HEK293 (cell line): ENCODE measurements at regions of chr1 and their contacts with region 1.

Region 1: DNA sequence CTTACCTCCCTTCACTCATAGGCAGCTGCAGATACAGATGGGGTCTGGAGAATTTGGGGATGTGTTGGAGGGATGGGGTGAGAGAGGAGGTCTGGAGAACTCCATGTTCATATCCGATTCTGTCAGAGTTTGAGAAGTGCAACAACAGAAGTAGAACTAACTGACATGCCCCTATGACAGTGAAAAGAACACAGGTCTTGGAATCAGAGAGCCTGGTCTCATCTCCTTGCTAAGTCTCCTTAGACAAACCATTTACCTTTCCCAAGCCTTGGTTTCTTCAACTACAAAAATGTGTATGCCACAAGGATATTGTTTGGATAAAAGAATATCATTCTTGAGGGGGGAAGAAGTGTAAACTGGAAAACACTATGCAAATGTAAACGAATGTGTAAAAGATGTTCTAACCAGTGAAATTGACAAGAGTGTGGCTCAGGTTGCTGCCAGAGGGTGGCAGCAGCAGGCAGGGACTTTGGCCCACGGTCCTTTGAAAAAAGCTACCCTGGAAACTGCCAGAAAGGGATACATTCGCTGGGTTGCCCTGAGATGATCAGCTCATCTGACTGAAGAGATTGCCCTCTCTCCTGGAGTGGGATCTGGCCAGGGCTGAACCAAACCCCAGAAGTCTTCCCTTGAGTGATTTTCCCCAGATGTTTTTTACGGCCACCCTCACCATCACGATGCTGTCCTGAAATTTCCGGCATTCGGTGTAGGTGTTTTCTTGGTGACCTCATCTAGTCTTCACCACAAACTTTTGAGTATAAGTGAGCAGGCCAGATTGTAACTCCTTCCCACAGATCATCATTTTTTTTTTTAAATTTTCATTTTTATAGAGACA is 17.0 kb upstream of the CD2 start:
- H3K4me3 ChIP-seq: no peak overlapping the region
- H3K27ac ChIP-seq: no peak overlapping the region
- H3K4me1 ChIP-seq: no peaks in the 10 kb centered on the region
- CTCF ChIP-seq: peak; percentile 52; the same call in 1 of the 2 replicates

Region 2: DNA sequence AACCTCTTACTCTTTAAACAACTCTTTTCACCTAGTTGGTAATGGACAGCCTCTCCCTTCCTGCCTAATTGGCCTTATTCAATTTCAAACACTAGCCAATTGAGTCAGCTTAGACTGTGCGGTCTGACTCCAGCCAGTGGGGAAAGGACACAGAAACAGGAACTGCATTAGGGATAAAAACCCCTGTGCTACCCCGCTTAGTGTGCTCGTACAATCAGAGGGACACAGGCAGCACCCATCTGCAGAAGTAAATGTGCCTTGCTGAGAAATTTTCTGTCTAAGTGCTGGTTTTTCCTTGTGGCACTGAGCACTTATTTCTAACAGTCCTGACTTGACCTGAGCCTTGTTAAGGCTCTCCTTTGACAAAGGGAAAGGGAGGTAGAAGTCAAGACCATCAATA is 11.0 kb after region 1 on chr1:
- CTCF ChIA-PET with region 1: interaction called, 10 read pairs
- POLR2A ChIA-PET with region 1: no interaction called
- H3K4me3 ChIP-seq: no peak overlapping the region
- H3K27ac ChIP-seq: no peak overlapping the region
- H3K4me1 ChIP-seq: no peaks in the 10 kb centered on the region
- CTCF ChIP-seq: no peak

Region 3: GRCh38 chr1:116814926-116815723 is 77.9 kb after region 1 on chr1:
- CTCF ChIA-PET with region 1: interaction called, 13 read pairs
- POLR2A ChIA-PET with region 1: no interaction called
- H3K4me3 ChIP-seq: no peak overlapping the region
- H3K27ac ChIP-seq: no peak overlapping the region
- H3K4me1 ChIP-seq: no peaks in the 10 kb centered on the region
- CTCF ChIP-seq: no peak

Region 4: DNA sequence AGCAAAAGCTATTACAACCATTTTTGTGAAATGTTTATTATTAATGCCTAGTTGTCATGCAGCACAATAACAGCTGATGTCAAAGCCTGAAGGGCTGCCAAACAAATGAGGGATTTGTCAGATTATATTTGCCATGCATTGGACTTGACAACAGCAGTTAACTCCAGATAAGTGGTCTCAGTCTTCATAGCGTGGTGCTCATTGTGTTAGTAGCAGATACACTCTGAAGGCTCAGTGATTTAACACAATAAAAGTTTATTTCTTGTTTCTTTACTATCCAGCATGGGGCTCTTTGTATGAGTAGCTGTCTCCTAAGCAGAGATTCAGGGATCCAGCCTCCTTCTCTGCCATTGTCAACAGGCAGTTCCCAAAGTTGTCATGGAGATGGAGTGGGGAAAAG is 96.5 kb after region 1 on chr1:
- CTCF ChIA-PET with region 1: no interaction called
- POLR2A ChIA-PET with region 1: no interaction called
- H3K4me3 ChIP-seq: no peak overlapping the region
- H3K27ac ChIP-seq: no peak overlapping the region
- H3K4me1 ChIP-seq: no peaks in the 10 kb centered on the region
- CTCF ChIP-seq: no peak

Region 5: GRCh38 chr1:116881879-116882520 is 144.8 kb after region 1 on chr1:
- CTCF ChIA-PET with region 1: interaction called, 23 read pairs
- POLR2A ChIA-PET with region 1: no interaction called
- H3K4me3 ChIP-seq: no peak overlapping the region
- H3K27ac ChIP-seq: no peak overlapping the region
- H3K4me1 ChIP-seq: peaks cover 3% of the 10 kb centered on the region; the same call in 1 of the 2 replicates
- CTCF ChIP-seq: peak; percentile 49; the same call in 1 of the 2 replicates

Region 6: GRCh38 chr1:116982319-116983004 is 245.2 kb after region 1 on chr1:
- CTCF ChIA-PET with region 1: no interaction called
- POLR2A ChIA-PET with region 1: no interaction called
- H3K4me3 ChIP-seq: no peak overlapping the region
- H3K27ac ChIP-seq: no peak overlapping the region
- H3K4me1 ChIP-seq: no peaks in the 10 kb centered on the region
- CTCF ChIP-seq: no peak

Region 7: GRCh38 chr1:117059678-117060440 is 322.6 kb after region 1 on chr1 and contains the start of gene TTF2:
- CTCF ChIA-PET with region 1: interaction called, 19 read pairs
- POLR2A ChIA-PET with region 1: interaction called, 5 read pairs
- H3K4me3 ChIP-seq: peak within 1 kb of the TSS; percentile 90
- H3K27ac ChIP-seq: peak within 1 kb of the TSS; percentile 86
- H3K4me1 ChIP-seq: no peaks in the 10 kb centered on the region
- CTCF ChIP-seq: peak; percentile 71